Activated B cell treated with CpG ODN at 0.5 μM for 24 hours (primary cell): ENCODE measurements at regions of chr17 and their contacts with region 1.

Region 1: GRCh38 chr17:19648475-19649406 is at the start of gene ALDH3A2:
- DNase-seq: peak; percentile 91
- ATAC-seq: peak; percentile 95
- H3K4me3 Mint-ChIP-seq: peak within 1 kb of the TSS; percentile 93
- H3K27ac Mint-ChIP-seq: peak within 1 kb of the TSS; percentile 95
- H3K4me1 Mint-ChIP-seq: peaks cover 35% of the 10 kb centered on the region
- H3K27me3 Mint-ChIP-seq: peaks cover 2% of the 10 kb centered on the region
- CTCF ChIP-seq: no peak
- total RNA-seq, gene ALDH3A2: 18.3 and 19.3 TPM in 2 replicates

Region 2: DNA sequence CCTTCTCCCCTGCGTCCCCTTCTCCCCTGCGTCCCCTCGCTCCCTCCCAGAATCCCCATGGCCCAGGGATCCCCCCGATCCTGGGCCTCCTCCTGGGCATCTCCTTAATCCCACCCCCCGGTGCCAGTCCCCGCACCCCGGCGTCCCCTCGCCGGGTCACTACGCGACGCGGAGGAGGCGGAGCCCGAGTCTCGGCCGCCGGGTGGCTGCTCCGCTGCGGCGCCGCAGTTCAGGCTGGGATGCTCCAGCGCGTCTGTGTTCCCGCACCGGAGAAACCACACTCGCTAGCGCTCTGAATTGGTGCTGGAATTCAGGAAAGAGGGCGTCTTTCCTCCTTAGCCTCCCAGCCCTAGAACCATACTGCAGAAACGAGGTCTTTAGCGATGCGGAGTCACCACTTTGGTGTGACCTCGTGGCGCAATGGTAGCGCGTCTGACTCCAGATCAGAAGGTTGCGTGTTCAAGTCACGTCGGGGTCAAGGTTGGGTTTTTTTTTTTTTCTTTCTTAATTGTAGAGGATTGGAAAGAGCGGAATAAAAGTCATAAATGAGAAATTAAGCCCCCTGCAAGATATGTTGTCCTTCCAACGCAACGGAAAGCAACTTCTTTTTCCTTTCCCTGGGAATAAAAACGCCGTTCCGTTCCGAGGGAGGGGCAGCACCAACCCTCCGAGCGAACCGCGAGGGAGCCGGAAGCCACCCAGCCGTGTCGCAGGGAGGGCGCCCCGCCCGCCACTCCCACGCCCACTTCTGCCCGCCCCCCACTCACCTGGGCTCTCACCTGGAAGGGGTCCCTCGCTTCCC is 140.8 kb before region 1 on chr17:
- CTCF ChIA-PET with region 1: interaction called, 3 read pairs
- POLR2A ChIA-PET with region 1: no interaction called
- intact Hi-C with region 1: loop called (anchors 1 kb)
- DNase-seq: peak; percentile 83
- ATAC-seq: peak; percentile 80
- H3K4me3 Mint-ChIP-seq: peak overlapping the region; percentile 92
- H3K27ac Mint-ChIP-seq: peak overlapping the region; percentile 94
- H3K4me1 Mint-ChIP-seq: peaks cover 11% of the 10 kb centered on the region
- H3K27me3 Mint-ChIP-seq: peaks cover 2% of the 10 kb centered on the region
- CTCF ChIP-seq: no peak

Region 3: GRCh38 chr17:19579867-19580565 is 68.7 kb before region 1 on chr17:
- CTCF ChIA-PET with region 1: no interaction called
- POLR2A ChIA-PET with region 1: no interaction called
- intact Hi-C with region 1: no loop called
- DNase-seq: no peak
- ATAC-seq: no peak
- H3K4me3 Mint-ChIP-seq: peak overlapping the region; percentile 58
- H3K27ac Mint-ChIP-seq: no peak overlapping the region
- H3K4me1 Mint-ChIP-seq: peaks cover 3% of the 10 kb centered on the region
- H3K27me3 Mint-ChIP-seq: peaks cover 31% of the 10 kb centered on the region
- CTCF ChIP-seq: no peak

Region 4: GRCh38 chr17:19744922-19745757 is 96.4 kb after region 1 on chr17:
- CTCF ChIA-PET with region 1: interaction called, 10 read pairs
- POLR2A ChIA-PET with region 1: no interaction called
- intact Hi-C with region 1: no loop called
- DNase-seq: peak; percentile 74
- ATAC-seq: peak; percentile 97
- H3K4me3 Mint-ChIP-seq: peak overlapping the region; percentile 80
- H3K27ac Mint-ChIP-seq: no peak overlapping the region
- H3K4me1 Mint-ChIP-seq: peaks cover 6% of the 10 kb centered on the region
- H3K27me3 Mint-ChIP-seq: peaks cover 13% of the 10 kb centered on the region
- CTCF ChIP-seq: no peak

Region 5: DNA sequence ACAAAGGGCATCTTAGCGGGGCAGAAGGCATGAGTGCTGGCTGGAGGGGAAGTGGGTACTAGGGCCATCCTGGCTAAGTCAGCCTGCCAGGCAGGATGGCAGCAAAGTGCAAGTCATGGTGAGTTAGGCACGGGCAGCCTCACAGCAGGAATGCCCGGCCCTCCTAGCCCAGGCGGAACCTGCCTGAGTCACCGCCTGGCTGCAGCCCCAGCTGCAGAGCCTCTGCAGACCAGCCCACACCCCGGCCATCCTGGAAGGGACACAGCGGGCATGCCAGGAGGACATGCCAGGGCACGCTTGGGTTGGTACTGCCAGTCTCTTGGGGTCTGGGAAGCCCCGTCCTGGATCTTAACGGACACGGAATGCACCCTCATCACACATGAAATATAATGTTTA is 104.3 kb after region 1 on chr17:
- CTCF ChIA-PET with region 1: interaction called, 3 read pairs
- POLR2A ChIA-PET with region 1: interaction called, 15 read pairs
- intact Hi-C with region 1: loop called (anchors 2 kb)
- DNase-seq: no peak
- ATAC-seq: no peak
- H3K4me3 Mint-ChIP-seq: no peak overlapping the region
- H3K27ac Mint-ChIP-seq: no peak overlapping the region
- H3K4me1 Mint-ChIP-seq: peaks cover 45% of the 10 kb centered on the region
- H3K27me3 Mint-ChIP-seq: peaks cover 15% of the 10 kb centered on the region
- CTCF ChIP-seq: no peak